Activated CD4-positive, alpha-beta memory T cell treated with anti-CD3 and anti-CD28 coated beads, Interleukin-2, amount 10 ng/mL, durations not matched to agents 7 days and 5 days (primary cell): ENCODE measurements at regions of chr1 and their contacts with region 1.

Region 1: GRCh38 chr1:47725992-47726855 is 271.0 kb downstream of the TRABD2B start:
- DNase-seq: peak; percentile 68
- H3K4me3 Mint-ChIP-seq: no peak overlapping the region
- H3K27ac Mint-ChIP-seq: no peak overlapping the region
- H3K4me1 Mint-ChIP-seq: peaks cover 3% of the 10 kb centered on the region
- H3K27me3 Mint-ChIP-seq: peaks cover 55% of the 10 kb centered on the region

Region 2: GRCh38 chr1:47710329-47711071 is 15.7 kb before region 1 on chr1:
- CTCF ChIA-PET with region 1: interaction called, 16 read pairs
- POLR2A ChIA-PET with region 1: interaction called, 4 read pairs
- DNase-seq: peak; percentile 69
- H3K4me3 Mint-ChIP-seq: no peak overlapping the region
- H3K27ac Mint-ChIP-seq: peak overlapping the region; percentile 16
- H3K4me1 Mint-ChIP-seq: peaks cover 3% of the 10 kb centered on the region
- H3K27me3 Mint-ChIP-seq: peaks cover 71% of the 10 kb centered on the region

Region 3: GRCh38 chr1:47738560-47739182 is 12.4 kb after region 1 on chr1:
- CTCF ChIA-PET with region 1: interaction called, 21 read pairs
- POLR2A ChIA-PET with region 1: no interaction called
- DNase-seq: no peak
- H3K4me3 Mint-ChIP-seq: no peak overlapping the region
- H3K27ac Mint-ChIP-seq: no peak overlapping the region
- H3K4me1 Mint-ChIP-seq: no peaks in the 10 kb centered on the region
- H3K27me3 Mint-ChIP-seq: peaks cover 45% of the 10 kb centered on the region